ENCODE measurements at regions of chr4 and their contacts with region 1.

Region 1: DNA sequence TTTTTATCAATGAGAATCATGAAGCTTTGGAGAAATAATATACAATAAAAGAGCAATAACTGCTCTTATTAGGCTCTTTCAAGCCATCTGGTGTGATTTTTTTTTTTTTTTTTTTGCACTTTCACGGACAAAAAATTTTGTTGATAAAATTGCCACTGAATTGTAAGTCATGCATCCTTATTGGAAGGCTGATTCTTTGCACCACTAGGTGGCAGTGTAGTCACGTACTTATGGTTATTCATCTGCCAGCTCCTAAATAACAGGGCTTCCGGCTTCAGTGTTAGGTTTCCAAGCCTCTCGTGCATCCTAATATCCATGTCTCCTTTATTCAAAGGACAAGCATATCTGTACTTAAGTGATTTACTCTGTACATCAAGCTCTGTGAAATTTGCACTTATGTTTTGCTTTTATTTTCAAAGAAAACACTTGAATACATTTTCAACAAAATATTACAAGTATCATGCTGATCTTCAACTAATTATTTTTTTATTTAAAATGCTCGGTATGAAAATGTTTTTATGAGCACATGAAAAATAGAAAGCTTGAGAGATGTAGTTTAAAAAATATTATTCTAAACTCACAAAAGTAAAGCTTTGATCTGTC is 1578.3 kb upstream of the TENM3 start:
- DNase-seq: peak; percentile 79
- H3K4me3 Mint-ChIP-seq: no peak overlapping the region
- H3K27ac Mint-ChIP-seq: no peak overlapping the region
- H3K4me1 Mint-ChIP-seq: no peaks in the 10 kb centered on the region
- H3K27me3 Mint-ChIP-seq: peaks cover 6% of the 10 kb centered on the region

Region 2: DNA sequence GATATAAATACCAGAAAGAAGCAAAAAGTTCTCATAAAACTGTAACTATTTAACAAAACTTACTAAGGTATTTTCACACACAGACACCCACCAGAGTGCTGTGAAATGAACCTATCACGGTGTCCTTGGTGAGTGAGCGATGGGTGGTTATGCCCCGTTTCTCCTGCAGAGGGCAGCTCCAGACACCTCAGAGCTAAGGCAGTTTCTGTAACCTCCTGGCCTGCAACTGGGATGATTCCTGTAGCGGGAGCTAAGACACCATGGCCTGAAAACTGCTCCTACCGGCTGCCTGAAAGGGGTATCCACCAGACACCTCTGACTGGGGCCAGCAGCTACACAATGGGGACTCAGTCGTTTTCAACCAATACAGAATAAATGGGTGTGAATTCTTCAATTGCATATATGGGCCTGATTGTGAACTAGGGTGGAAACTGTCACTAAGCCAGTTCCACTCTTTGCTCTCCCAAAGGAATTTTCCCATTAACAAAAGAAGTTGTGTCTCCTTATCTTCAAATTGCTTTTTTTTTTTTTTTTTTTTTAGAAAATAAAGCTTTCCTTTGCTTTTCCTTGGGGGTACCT is 797.5 kb before region 1 on chr4:
- CTCF ChIA-PET with region 1: no interaction called
- intact Hi-C with region 1: loop called (anchors 2 kb)
- DNase-seq: peak; percentile 44
- H3K4me3 Mint-ChIP-seq: no peak overlapping the region
- H3K27ac Mint-ChIP-seq: no peak overlapping the region
- H3K4me1 Mint-ChIP-seq: no peaks in the 10 kb centered on the region
- H3K27me3 Mint-ChIP-seq: no peaks in the 10 kb centered on the region

Region 3: GRCh38 chr4:180557348-180557747 is 107.5 kb before region 1 on chr4:
- CTCF ChIA-PET with region 1: no interaction called
- intact Hi-C with region 1: no loop called
- DNase-seq: no peak
- H3K4me3 Mint-ChIP-seq: no peak overlapping the region
- H3K27ac Mint-ChIP-seq: no peak overlapping the region
- H3K4me1 Mint-ChIP-seq: no peaks in the 10 kb centered on the region
- H3K27me3 Mint-ChIP-seq: no peaks in the 10 kb centered on the region

Region 4: GRCh38 chr4:180828440-180829018 is 163.7 kb after region 1 on chr4:
- CTCF ChIA-PET with region 1: interaction called, 6 read pairs
- intact Hi-C with region 1: loop called (anchors 10 kb)
- DNase-seq: peak; percentile 10
- H3K4me3 Mint-ChIP-seq: no peak overlapping the region
- H3K27ac Mint-ChIP-seq: no peak overlapping the region
- H3K4me1 Mint-ChIP-seq: no peaks in the 10 kb centered on the region
- H3K27me3 Mint-ChIP-seq: no peaks in the 10 kb centered on the region

Region 5: GRCh38 chr4:180953572-180953971 is 288.7 kb after region 1 on chr4:
- CTCF ChIA-PET with region 1: no interaction called
- intact Hi-C with region 1: loop called (anchors 10 kb)
- DNase-seq: no peak
- H3K4me3 Mint-ChIP-seq: no peak overlapping the region
- H3K27ac Mint-ChIP-seq: no peak overlapping the region
- H3K4me1 Mint-ChIP-seq: no peaks in the 10 kb centered on the region
- H3K27me3 Mint-ChIP-seq: no peaks in the 10 kb centered on the region

Region 6: GRCh38 chr4:181143250-181143854 is 478.5 kb after region 1 on chr4:
- CTCF ChIA-PET with region 1: interaction called, 3 read pairs
- intact Hi-C with region 1: loop called (anchors 5 kb)
- DNase-seq: peak; percentile 82
- H3K4me3 Mint-ChIP-seq: no peak overlapping the region
- H3K27ac Mint-ChIP-seq: no peak overlapping the region
- H3K4me1 Mint-ChIP-seq: no peaks in the 10 kb centered on the region
- H3K27me3 Mint-ChIP-seq: peaks cover 7% of the 10 kb centered on the region

Region 7: DNA sequence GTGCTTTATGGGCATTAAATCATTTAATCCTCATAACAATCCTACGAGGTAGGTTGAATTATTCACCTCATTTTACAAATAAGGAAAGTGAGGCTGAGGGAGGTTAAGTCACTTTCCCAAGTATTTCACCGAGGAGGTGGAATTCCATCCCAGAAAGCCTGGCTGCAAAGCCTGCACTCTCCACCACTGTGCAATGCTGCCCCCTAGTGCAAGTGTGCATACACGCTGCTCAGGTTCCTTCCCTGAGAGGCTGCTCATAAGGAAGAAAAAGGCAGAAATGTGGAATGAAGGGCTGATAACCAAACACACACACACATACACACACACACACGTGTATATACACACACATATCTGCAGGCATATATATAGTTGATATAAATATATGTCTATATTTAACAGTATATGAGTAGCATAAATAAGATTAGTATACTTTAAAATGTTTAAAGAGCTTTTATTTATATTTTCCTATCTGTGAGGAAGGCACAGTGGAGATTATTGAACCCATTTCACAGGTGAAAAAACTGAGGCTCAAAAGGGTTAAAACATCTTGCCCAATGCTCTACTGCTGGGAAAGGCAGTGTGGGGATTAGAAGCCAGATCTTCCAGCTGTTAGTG is 863.8 kb after region 1 on chr4:
- CTCF ChIA-PET with region 1: no interaction called
- intact Hi-C with region 1: loop called (anchors 2 kb)
- DNase-seq: peak; percentile 46
- H3K4me3 Mint-ChIP-seq: no peak overlapping the region
- H3K27ac Mint-ChIP-seq: no peak overlapping the region
- H3K4me1 Mint-ChIP-seq: no peaks in the 10 kb centered on the region
- H3K27me3 Mint-ChIP-seq: peaks cover 2% of the 10 kb centered on the region

Measured in activated naive CD4-positive, alpha-beta T cell treated with anti-CD3 and anti-CD28 coated beads for 36 hours (primary cell).